HEK293 (cell line): ENCODE measurements at regions of chr9 and their contacts with region 1.

Region 1: DNA sequence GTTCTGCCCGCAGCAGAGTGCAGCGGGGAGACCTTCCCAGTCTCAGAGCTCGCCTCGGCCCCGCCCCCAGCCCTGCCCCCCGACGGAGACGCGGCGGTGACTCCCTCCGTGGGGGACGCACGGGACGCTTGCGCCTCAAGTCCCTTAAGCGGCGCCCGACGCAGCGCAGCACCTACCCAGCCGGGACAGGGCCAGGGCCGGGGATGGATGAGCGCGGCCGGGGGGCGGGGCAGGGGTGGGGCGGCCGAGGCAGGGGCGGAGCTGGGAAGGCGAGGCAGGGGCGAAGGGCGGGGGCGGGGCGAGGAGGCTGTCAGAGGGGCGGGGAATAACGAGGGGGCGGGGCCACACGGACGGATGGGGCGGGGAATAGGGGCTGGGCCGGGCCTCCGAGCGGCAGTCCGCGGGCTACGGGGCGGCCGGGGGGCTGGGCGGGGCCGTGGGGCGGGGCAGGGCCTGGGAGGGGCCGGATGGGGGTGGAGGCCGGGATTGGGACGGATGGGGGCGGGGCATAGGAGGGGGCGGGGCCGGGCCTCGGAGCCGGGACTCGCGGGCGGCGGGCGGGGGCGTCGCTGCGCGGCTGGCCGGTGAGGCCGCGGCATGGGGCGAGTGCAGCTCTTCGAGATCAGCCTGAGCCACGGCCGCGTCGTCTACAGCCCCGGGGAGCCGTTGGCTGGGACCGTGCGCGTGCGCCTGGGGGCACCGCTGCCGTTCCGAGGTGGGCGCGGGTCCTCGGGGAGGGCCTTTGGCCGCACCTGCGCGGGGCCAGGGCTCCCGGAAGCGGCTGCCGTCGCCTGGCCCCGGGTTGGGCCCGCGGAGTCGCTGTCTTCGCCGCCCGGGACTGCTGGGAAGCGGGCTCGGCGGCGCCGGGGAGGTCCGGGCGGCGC is at the start of gene ARRDC1:
- H3K4me3 ChIP-seq: peak within 1 kb of the TSS; percentile 66
- H3K27ac ChIP-seq: peak within 1 kb of the TSS; percentile 72; the same call in 1 of the 2 replicates
- H3K4me1 ChIP-seq: no peaks in the 10 kb centered on the region
- CTCF ChIP-seq: no peak

Region 2: GRCh38 chr9:137578518-137579258 is 26.7 kb before region 1 on chr9 and contains the start of gene DPH7:
- CTCF ChIA-PET with region 1: interaction called, 9 read pairs
- POLR2A ChIA-PET with region 1: interaction called, 28 read pairs
- H3K4me3 ChIP-seq: peak within 1 kb of the TSS; percentile 95
- H3K27ac ChIP-seq: peak within 1 kb of the TSS; percentile 84
- H3K4me1 ChIP-seq: no peaks in the 10 kb centered on the region; the same call in 1 of the 2 replicates
- CTCF ChIP-seq: peak; percentile 97

Region 3: DNA sequence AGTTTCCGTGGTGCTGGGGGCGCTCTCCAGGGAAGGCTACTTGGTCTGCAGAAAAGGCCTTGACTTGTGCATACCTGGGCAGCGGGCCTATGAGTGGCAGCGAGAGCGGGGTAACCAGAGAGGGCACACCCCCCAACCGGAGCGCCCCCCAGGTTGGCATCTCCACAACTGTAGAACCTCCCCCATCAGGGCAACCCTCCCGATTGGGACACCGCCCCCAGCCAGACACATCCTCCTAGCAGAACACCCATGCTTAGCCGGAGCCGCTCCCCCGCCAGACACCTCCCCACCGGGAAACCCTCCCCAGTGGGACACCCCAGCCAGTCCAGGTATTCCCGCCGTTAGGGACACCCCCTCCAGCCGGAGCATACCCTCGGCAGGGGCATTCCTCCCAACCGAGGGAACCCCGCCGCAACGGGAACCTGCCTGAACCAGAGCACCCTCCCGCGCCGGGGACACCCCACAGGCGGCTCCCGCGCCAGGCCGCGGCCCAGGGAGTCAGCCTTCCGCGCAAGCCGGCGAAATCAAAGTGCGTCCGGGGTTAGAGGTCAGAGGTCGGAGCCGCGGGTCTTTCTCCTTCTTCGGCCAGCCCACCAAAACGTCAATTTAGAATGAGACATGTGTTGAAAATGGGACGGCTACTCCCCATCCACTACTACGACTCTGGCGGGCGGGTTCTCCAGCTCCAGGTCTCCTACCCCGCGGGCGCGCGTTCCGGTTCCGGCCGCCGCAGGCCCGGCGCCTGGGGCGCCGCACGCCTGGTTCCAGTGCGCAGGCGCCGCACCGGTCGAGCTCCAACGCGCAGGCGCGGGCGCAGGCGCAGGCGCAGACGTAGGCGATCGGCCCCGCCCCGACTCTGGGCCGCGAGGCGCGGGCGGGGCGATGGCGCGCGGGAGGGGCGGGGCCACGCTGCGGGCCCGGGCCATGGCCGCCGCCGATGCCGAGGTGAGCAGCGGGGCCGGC is 13.0 kb after region 1 on chr9 and contains the start of gene EHMT1:
- CTCF ChIA-PET with region 1: interaction called, 3 read pairs
- POLR2A ChIA-PET with region 1: interaction called, 19 read pairs
- H3K4me3 ChIP-seq: peak within 1 kb of the TSS; percentile 90
- H3K27ac ChIP-seq: peak within 1 kb of the TSS; percentile 91
- H3K4me1 ChIP-seq: no peaks in the 10 kb centered on the region
- CTCF ChIP-seq: peak; percentile 57

Region 4: DNA sequence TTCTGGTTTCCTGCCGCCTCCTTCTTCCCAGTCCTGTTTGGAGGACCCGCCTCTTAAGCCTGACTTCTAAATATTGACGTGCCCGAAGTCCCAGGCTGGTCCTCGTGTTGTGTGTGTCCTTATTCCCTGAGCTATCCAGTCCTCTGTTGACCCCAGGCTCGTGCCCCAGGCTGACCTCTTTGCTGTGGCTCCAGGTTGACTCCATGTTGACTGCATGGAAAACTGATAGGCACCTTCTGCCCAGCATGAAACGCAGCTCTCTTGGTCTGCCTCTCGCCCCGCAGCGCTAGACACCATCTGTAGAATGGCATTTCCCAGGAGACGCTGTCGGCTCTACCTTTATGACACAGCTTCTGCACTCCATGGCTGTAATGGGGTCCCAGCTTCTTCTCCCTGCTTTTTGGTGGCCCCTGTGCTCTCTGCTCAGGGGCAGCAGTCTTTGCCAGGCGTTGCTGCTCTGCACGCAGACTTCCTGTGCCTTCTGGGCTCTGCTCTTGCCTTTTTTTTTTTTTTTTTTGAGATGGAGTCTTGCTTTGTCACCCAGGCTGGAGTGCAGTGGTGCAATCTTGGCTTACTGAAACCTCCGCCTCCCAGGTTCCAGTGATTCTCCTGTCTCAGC is 41.8 kb after region 1 on chr9:
- CTCF ChIA-PET with region 1: no interaction called
- POLR2A ChIA-PET with region 1: no interaction called
- H3K4me3 ChIP-seq: no peak overlapping the region
- H3K27ac ChIP-seq: no peak overlapping the region; the same call in 1 of the 2 replicates
- H3K4me1 ChIP-seq: 0 out of 2 replicates have a peak, but pooled peaks cover 4% of the 10 kb centered on the region
- CTCF ChIP-seq: no peak

Region 5: GRCh38 chr9:137660144-137660543 is 54.8 kb after region 1 on chr9:
- CTCF ChIA-PET with region 1: no interaction called
- POLR2A ChIA-PET with region 1: no interaction called
- H3K4me3 ChIP-seq: no peak overlapping the region
- H3K27ac ChIP-seq: no peak overlapping the region
- H3K4me1 ChIP-seq: no peaks in the 10 kb centered on the region
- CTCF ChIP-seq: no peak